ENCODE measurements at regions of chr6 and their contacts with region 1.

Region 1: DNA sequence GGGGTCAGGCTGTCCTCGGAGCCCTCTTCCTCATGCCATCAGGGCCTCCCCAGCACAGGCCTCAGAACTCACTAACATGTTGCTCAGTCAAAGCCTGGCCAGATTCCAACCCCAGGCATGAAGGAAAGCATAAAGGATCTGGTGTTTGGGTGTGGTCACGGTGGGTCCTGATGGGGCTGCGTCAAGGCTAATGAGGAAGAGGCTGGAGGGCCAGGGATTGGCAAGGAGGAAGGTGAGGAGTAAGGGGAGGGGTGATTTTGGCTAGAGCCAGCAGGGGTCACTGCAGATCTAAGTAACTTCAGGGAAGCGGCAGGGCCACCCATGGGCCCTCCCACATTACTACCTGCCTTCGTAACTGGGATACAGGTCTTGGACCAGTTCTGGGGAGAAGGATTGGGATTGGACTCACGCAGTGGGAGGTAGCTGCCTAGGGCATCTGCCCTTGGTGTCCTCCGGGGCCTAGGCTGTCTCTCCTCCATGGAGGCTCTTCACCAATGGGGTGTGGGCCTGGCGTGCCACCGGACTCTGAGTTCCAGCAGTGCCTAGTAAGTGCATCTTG is 36.2 kb upstream of the MRPS18A start:
- DNase-seq: peak; percentile 84
- ATAC-seq: peak; percentile 91
- H3K4me3 ChIP-seq: no peak overlapping the region; a peak in 1 of 6 replicates
- H3K27ac ChIP-seq: no peak overlapping the region
- H3K4me1 ChIP-seq: peaks cover 50% of the 10 kb centered on the region
- H3K27me3 ChIP-seq: peaks cover 0 to 5% of the 10 kb centered on the region in 2 experiments; a peak in 2 of 5 replicates
- CTCF ChIP-seq: peak; percentile 98
- EP300 ChIP-seq: no peak
- POLR2A ChIP-seq: no peak
- RAD21 ChIP-seq: peak; percentile 95

Region 2: GRCh38 chr6:43758617-43759050 is 34.8 kb after region 1 on chr6:
- CTCF ChIA-PET with region 1: interaction called, 5 read pairs
- POLR2A ChIA-PET with region 1: no interaction called
- in situ Hi-C with region 1: no loop called
- intact Hi-C with region 1: loop called (anchors 2 kb)
- DNase-seq: no peak
- ATAC-seq: peak; percentile 83
- H3K4me3 ChIP-seq: no peak overlapping the region
- H3K27ac ChIP-seq: no peak overlapping the region
- H3K4me1 ChIP-seq: peaks cover 46% of the 10 kb centered on the region
- H3K27me3 ChIP-seq: peaks cover 13 to 52% of the 10 kb centered on the region in 2 experiments; a peak in 4 of 5 replicates
- CTCF ChIP-seq: peak; percentile 86
- EP300 ChIP-seq: no peak
- POLR2A ChIP-seq: no peak
- RAD21 ChIP-seq: peak; percentile 80

Region 3: GRCh38 chr6:43786664-43787329 is 63.0 kb after region 1 on chr6:
- CTCF ChIA-PET with region 1: no interaction called
- POLR2A ChIA-PET with region 1: no interaction called
- in situ Hi-C with region 1: no loop called
- intact Hi-C with region 1: no loop called
- DNase-seq: no peak
- ATAC-seq: peak; percentile 12
- H3K4me3 ChIP-seq: no peak overlapping the region
- H3K27ac ChIP-seq: no peak overlapping the region
- H3K4me1 ChIP-seq: no peaks in the 10 kb centered on the region
- H3K27me3 ChIP-seq: peaks cover 0 to 5% of the 10 kb centered on the region in 2 experiments; a peak in 3 of 5 replicates
- CTCF ChIP-seq: no peak
- EP300 ChIP-seq: no peak
- POLR2A ChIP-seq: peak in 1 of 2 experiments; percentile 52; a peak in 1 of 4 replicates
- RAD21 ChIP-seq: no peak

Region 4: DNA sequence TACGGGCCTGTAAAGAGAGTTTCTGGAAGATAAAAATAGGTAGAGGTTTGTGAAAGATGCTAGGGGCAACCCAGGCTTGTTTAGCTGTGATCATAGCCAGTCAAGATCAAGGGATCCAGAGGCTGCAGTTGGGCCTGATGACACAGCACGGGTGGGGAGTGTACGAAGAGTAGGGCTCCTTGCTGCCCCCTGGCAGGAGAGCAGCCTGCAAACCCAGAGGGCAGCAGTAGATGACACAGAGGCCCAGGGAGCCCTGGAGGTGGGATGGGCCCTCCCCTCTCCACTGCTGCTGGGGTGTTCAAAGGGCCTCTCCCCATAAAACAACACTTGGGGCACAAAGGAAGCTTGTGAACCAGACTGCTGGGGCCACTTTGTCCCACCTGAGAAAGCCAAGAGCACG is 93.4 kb after region 1 on chr6:
- CTCF ChIA-PET with region 1: no interaction called
- POLR2A ChIA-PET with region 1: interaction called, 4 read pairs
- in situ Hi-C with region 1: no loop called
- intact Hi-C with region 1: loop called (anchors 1 kb)
- DNase-seq: peak; percentile 72
- ATAC-seq: peak; percentile 99
- H3K4me3 ChIP-seq: no peak overlapping the region
- H3K27ac ChIP-seq: no peak overlapping the region
- H3K4me1 ChIP-seq: peaks cover 46% of the 10 kb centered on the region
- H3K27me3 ChIP-seq: peaks cover 0 to 3% of the 10 kb centered on the region in 2 experiments; a peak in 2 of 5 replicates
- CTCF ChIP-seq: peak; percentile 92
- EP300 ChIP-seq: no peak
- POLR2A ChIP-seq: no peak
- RAD21 ChIP-seq: peak; percentile 86

Region 5: GRCh38 chr6:43838276-43839036 is 114.6 kb after region 1 on chr6:
- CTCF ChIA-PET with region 1: interaction called, 6 read pairs
- POLR2A ChIA-PET with region 1: no interaction called
- in situ Hi-C with region 1: no loop called
- intact Hi-C with region 1: loop called (anchors 1 kb)
- DNase-seq: peak; percentile 41
- ATAC-seq: peak; percentile 63
- H3K4me3 ChIP-seq: peak overlapping the region in 1 of 3 experiments; percentile 34; a peak in 1 of 6 replicates
- H3K27ac ChIP-seq: no peak overlapping the region
- H3K4me1 ChIP-seq: peaks cover 69% of the 10 kb centered on the region
- H3K27me3 ChIP-seq: peaks cover 9 to 46% of the 10 kb centered on the region in 2 experiments
- CTCF ChIP-seq: peak; percentile 74
- EP300 ChIP-seq: 0 out of 4 replicates have a peak, but pooled peaks of 1 of the 2 experiments have one; percentile 2
- POLR2A ChIP-seq: no peak
- RAD21 ChIP-seq: peak; percentile 75

Measured in HepG2 (cell line).